OCI-LY7 (cell line): ENCODE measurements at regions of chr3 and their contacts with region 1.

Region 1: DNA sequence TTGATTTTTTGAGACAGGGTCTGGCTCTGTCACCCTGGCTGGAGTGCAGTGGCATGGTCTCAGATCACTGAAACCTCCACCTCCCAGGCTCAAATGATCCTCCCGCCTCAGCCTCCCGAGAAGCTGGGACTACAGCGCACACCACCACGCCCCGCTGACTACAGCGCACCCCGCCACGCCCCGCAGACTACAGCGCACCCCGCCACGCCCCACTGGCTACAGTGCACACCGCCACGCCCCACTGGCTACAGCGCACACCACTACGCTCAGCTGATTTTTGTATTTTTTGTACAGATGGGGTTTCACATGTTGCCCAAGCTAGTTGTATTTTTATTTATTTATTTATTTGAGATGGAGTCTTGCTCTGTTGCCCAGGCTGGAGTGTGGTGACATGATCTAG is 35.6 kb downstream of the SLC51A start:
- DNase-seq: no peak
- H3K4me3 ChIP-seq: no peak overlapping the region
- H3K27ac ChIP-seq: no peak overlapping the region
- H3K4me1 ChIP-seq: no peaks in the 10 kb centered on the region
- CTCF ChIP-seq: no peak

Region 2: GRCh38 chr3:196440041-196440537 is 188.2 kb after region 1 on chr3:
- CTCF ChIA-PET with region 1: no interaction called
- POLR2A ChIA-PET with region 1: no interaction called
- intact Hi-C with region 1: loop called (anchors 10 kb)
- DNase-seq: no peak
- H3K4me3 ChIP-seq: no peak overlapping the region
- H3K27ac ChIP-seq: no peak overlapping the region
- H3K4me1 ChIP-seq: peaks cover 12% of the 10 kb centered on the region
- CTCF ChIP-seq: no peak

Region 3: GRCh38 chr3:196518966-196519717 is 267.2 kb after region 1 on chr3:
- CTCF ChIA-PET with region 1: no interaction called
- POLR2A ChIA-PET with region 1: interaction called, 3 read pairs
- intact Hi-C with region 1: loop called (anchors 1 kb)
- DNase-seq: peak; percentile 83
- H3K4me3 ChIP-seq: no peak overlapping the region
- H3K27ac ChIP-seq: no peak overlapping the region
- H3K4me1 ChIP-seq: no peaks in the 10 kb centered on the region
- CTCF ChIP-seq: peak; percentile 91